HAP-1 (cell line): ENCODE measurements at regions of chr4 and their contacts with region 1.

Region 1: GRCh38 chr4:16289897-16290554 is 63.8 kb upstream of the TAPT1 start:
- DNase-seq: peak; percentile 22 to 51
- H3K4me3 ChIP-seq: no peak overlapping the region
- H3K4me1 ChIP-seq: peaks cover 20% of the 10 kb centered on the region
- H3K27me3 ChIP-seq: peaks cover 22% of the 10 kb centered on the region

Region 2: DNA sequence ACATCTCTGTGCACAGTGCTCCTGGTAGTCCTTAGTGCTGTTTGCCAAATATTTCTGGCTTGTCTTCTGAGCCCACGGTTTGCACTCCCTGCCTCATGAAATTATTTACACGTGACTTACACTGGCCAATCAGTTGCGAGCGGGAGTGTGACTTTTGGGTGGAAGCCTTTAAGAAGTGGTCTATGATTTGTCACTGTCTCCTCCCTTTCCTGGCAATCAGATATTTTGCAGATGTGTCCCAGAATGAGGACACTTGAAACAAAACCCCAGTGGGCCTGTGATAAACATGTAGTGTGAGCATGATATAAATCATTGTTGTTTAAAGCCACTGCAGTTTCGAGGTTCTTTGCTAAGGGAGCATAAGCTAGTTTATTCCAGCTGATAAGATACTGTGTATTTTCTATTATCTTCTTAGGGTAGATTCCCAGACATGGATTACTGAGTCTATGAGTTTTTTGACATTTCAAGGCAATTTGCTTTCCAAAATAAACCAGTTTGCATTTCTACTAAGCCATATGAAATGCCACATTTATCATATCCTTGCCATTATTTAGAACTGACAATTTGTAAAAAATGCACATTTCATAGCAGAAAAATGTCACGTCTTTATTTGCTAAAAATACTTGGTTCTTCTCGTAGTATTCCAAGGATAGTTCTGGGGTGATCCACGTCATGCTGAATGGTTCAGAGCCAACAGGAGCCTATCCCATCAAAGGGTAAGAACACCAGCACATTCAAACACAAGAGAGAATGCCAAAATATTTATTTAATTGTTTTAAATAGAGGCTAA is 575.2 kb before region 1 on chr4:
- in situ Hi-C with region 1: no loop called
- DNase-seq: no peak
- H3K4me3 ChIP-seq: no peak overlapping the region
- H3K4me1 ChIP-seq: no peaks in the 10 kb centered on the region
- H3K27me3 ChIP-seq: no peaks in the 10 kb centered on the region

Region 3: DNA sequence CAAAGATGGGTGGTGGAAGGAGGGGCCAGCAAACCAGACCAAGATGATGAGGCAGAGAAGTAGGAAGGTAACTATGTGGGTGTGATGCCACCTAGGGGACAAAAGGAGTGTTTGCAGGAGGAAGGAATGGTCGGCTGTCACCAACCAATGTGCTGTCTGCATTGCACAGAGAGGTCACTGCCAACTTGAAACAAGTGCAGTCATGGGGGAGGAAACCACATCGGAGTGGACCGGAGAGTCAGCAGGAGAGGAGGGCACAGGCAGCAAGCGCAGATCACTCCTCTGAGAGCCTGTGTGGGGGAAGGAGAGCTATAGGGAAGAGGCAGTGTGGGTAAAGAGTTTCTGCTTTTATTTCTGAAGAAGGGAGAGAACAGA is 288.6 kb before region 1 on chr4:
- in situ Hi-C with region 1: no loop called
- DNase-seq: peak; percentile 71 to 73
- H3K4me3 ChIP-seq: no peak overlapping the region
- H3K4me1 ChIP-seq: no peaks in the 10 kb centered on the region
- H3K27me3 ChIP-seq: peaks cover 3% of the 10 kb centered on the region

Region 4: DNA sequence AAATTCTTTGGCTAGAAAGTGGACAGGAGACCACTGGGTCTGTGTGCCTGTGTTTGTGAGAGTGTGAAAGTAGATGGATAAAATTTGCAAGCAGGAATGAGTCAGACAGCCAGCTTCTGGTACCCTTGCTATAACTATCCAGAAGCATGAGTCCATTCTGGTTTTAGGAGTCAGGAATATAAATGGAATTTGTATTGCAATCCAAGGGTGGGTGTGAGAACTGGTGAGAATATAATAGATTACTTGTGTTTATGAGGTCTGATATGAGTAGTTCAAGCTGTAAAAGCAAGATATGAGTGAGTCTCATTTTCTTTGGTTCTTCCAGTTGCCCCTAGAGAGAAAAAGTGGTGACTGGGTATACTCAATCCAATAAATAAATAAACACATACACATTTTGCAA is 149.0 kb after region 1 on chr4:
- in situ Hi-C with region 1: loop called (anchors 10 kb)
- DNase-seq: no peak
- H3K4me3 ChIP-seq: no peak overlapping the region
- H3K4me1 ChIP-seq: no peaks in the 10 kb centered on the region
- H3K27me3 ChIP-seq: peaks cover 5% of the 10 kb centered on the region

Region 5: DNA sequence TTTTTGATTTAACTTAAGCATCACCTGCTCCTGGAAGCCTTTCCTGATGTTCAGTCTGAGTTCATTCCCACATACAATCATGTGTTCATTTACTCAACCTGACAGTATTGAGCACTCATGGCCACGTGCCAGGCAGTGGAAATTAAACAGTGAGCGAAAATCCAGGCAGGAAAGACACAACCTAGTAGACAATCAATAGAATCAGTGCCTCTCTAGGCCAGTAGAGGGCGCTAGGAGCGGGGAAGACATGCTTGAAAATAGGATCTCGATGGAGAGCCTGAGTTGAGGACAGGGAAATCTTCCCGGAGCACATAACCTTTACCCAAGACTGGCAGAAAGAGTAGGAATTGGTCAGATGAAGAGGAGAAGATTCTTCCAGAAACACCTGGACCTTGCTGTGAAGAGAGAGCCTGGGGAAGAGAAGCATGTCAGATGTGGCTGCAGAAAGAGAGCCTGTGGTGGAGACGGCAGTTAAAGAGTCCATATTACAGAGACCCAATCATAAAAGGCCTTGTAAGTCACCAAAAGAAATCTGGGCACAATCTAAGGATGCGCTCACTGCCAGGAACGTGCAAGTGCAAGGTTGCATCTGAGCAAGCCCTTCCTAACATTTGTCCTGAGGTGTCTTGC is 504.9 kb after region 1 on chr4:
- in situ Hi-C with region 1: loop called (anchors 25 kb)
- DNase-seq: peak; percentile 62 to 90
- H3K4me3 ChIP-seq: no peak overlapping the region
- H3K4me1 ChIP-seq: peaks cover 7% of the 10 kb centered on the region
- H3K27me3 ChIP-seq: no peaks in the 10 kb centered on the region

Region 6: DNA sequence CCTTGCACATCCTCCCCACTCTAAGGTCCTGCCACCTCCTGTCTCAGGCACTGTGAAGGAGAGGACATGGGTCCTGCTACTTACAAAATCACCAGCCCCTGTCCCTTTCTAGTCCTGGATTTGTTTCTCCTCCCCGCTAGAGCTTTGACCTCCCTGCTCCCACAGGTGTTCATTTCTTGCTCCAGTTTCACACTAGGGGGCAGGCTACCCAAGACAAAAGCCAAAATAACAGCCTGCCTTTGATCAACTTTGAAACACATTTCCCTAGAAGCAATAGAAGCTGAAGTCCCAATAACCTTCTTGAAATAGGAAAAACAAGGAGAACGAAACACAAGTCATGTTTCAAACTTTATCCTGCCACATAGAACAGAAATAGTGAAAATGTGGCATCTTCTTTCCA is 1057.4 kb after region 1 on chr4:
- in situ Hi-C with region 1: loop called (anchors 25 kb)
- DNase-seq: peak; percentile 45 to 62
- H3K4me3 ChIP-seq: no peak overlapping the region
- H3K4me1 ChIP-seq: no peaks in the 10 kb centered on the region; the same call in 1 of the 2 replicates
- H3K27me3 ChIP-seq: no peaks in the 10 kb centered on the region

Region 7: DNA sequence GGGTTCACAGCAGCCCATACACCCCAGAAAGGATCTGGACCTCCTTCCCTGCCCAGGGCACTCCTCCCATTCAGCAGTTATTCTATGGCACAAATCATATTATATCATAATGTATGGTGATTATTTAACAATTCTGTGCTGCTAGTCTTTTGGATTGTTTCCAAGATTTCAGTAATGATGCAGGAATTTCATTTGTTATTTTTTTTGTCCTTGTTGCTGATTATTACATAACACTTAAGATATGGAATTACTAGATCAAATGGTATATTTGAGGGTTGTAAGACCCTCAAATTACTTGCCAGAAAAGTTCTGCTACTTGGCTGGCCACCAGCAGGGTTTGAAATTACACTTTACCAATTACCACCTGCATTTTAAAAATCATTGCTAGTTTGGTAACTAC is 1185.5 kb after region 1 on chr4:
- in situ Hi-C with region 1: loop called (anchors 10 kb)
- DNase-seq: no peak
- H3K4me3 ChIP-seq: no peak overlapping the region
- H3K4me1 ChIP-seq: no peaks in the 10 kb centered on the region
- H3K27me3 ChIP-seq: no peaks in the 10 kb centered on the region